A549 (cell line): ENCODE measurements at regions of chr20 and their contacts with region 1.

Region 1: GRCh38 chr20:21235484-21236445 is 67.4 kb upstream of the XRN2 start:
- DNase-seq: peak; percentile 50 to 78
- ATAC-seq: peak; percentile 90 to 92
- H3K4me3 ChIP-seq: no peak overlapping the region
- H3K27ac ChIP-seq: no peak overlapping the region
- H3K4me1 ChIP-seq: peaks cover 6% of the 10 kb centered on the region; the same call in 1 of the 3 replicates
- CTCF ChIP-seq: peak; percentile 98
- EP300 ChIP-seq: no peak
- POLR2A ChIP-seq: no peak
- RAD21 ChIP-seq: peak; percentile 78 to 85

Region 2: GRCh38 chr20:20806121-20807095 is 429.4 kb before region 1 on chr20:
- CTCF ChIA-PET with region 1: no interaction called
- POLR2A ChIA-PET with region 1: no interaction called
- DNase-seq: no peak
- ATAC-seq: no peak
- H3K4me3 ChIP-seq: no peak overlapping the region
- H3K27ac ChIP-seq: no peak overlapping the region
- H3K4me1 ChIP-seq: no peaks in the 10 kb centered on the region
- CTCF ChIP-seq: no peak
- EP300 ChIP-seq: no peak
- POLR2A ChIP-seq: no peak
- RAD21 ChIP-seq: no peak

Region 3: GRCh38 chr20:20843982-20844381 is 391.8 kb before region 1 on chr20:
- CTCF ChIA-PET with region 1: interaction called, 11 read pairs
- POLR2A ChIA-PET with region 1: no interaction called
- DNase-seq: no peak
- ATAC-seq: peak in 1 of 2 experiments; percentile 53; a peak in 2 of 6 replicates
- H3K4me3 ChIP-seq: no peak overlapping the region
- H3K27ac ChIP-seq: no peak overlapping the region
- H3K4me1 ChIP-seq: no peaks in the 10 kb centered on the region
- CTCF ChIP-seq: no peak
- EP300 ChIP-seq: no peak
- POLR2A ChIP-seq: no peak
- RAD21 ChIP-seq: no peak

Region 4: DNA sequence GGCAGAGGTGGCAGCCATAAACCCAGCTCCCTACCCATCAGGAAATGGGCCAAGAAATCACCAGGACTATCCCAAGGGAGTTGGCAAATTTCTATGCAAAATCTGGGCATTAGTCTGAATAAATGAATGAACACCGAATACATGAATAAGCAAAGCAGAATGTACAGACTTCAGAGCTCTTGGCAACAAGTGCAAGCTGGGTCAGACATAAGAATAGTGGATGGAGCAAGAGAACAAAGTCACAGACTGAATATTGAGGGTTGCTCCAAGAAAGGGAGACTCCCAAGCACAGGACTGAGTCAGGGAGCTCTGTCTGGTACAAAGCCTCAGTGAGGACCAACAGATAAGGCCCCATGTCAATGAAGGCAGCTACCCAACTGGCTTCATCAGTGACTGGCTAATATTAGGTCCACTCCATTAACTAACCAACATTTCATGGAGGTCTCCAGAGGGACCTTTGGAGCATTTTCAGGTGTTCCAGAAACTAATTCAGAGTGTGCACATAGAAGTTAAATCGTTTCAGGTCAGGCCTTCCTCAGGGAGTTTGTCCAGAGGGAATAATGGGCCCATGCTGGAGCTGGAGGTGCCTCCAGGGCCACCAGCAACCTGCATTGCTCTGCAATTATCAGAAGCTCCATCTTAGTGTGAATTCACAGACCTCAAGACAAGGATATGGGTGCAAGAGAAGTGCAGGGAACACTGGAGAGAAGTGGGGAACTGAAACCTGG is 331.8 kb before region 1 on chr20:
- CTCF ChIA-PET with region 1: no interaction called
- POLR2A ChIA-PET with region 1: no interaction called
- DNase-seq: no peak
- ATAC-seq: no peak
- H3K4me3 ChIP-seq: no peak overlapping the region
- H3K27ac ChIP-seq: no peak overlapping the region
- H3K4me1 ChIP-seq: no peaks in the 10 kb centered on the region
- CTCF ChIP-seq: no peak
- EP300 ChIP-seq: no peak
- POLR2A ChIP-seq: no peak
- RAD21 ChIP-seq: no peak

Region 5: DNA sequence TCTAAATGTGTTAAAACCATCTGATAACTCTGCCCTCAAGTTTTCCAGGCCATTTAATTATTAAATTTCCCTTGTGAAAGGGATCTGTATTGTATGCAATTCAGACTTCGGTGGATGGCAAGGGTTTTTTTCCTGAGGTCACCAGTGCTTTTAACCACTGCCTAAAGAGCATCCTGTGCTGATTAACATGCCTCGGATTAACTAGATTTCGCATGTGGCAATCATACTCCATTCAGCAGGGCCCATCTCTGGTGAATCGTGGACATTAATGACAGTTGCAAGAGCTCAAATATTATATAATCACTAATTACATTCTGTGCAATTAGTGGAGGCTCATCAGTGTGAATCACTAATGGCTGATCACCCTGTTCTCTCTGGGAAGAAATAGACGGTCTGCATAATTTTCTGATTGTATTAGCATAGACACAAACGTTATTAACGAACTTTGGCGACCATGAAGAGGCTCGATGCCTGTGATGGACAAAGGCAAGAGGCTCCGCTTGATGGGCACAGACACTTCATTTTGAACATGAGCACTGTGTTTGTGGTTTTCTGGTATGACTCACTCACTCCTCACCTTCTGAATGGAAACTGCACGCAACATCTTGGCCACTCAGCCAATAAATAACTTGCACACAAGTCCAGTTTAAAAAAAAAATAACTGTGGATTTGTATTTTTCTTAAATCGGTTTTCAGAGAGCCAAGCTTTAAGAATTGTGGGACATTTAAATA is 161.0 kb before region 1 on chr20:
- CTCF ChIA-PET with region 1: no interaction called
- POLR2A ChIA-PET with region 1: no interaction called
- DNase-seq: no peak
- ATAC-seq: peak in 1 of 2 experiments; percentile 54; a peak in 1 of 6 replicates
- H3K4me3 ChIP-seq: no peak overlapping the region
- H3K27ac ChIP-seq: no peak overlapping the region
- H3K4me1 ChIP-seq: no peaks in the 10 kb centered on the region
- CTCF ChIP-seq: no peak
- EP300 ChIP-seq: no peak
- POLR2A ChIP-seq: no peak
- RAD21 ChIP-seq: no peak

Region 6: GRCh38 chr20:21182832-21183563 is 52.8 kb before region 1 on chr20:
- CTCF ChIA-PET with region 1: interaction called, 20 read pairs
- POLR2A ChIA-PET with region 1: no interaction called
- DNase-seq: peak in 1 of 2 experiments; percentile 47
- ATAC-seq: peak; percentile 85 to 88
- H3K4me3 ChIP-seq: no peak overlapping the region
- H3K27ac ChIP-seq: peak overlapping the region; percentile 16 to 66; a peak in 4 of 6 replicates
- H3K4me1 ChIP-seq: peaks cover 32% of the 10 kb centered on the region
- CTCF ChIP-seq: no peak
- EP300 ChIP-seq: no peak; a peak in 1 of 5 replicates
- POLR2A ChIP-seq: no peak
- RAD21 ChIP-seq: no peak

Region 7: GRCh38 chr20:21251278-21251677 is 15.5 kb after region 1 on chr20:
- CTCF ChIA-PET with region 1: interaction called, 49 read pairs
- POLR2A ChIA-PET with region 1: no interaction called
- DNase-seq: no peak
- ATAC-seq: no peak
- H3K4me3 ChIP-seq: no peak overlapping the region
- H3K27ac ChIP-seq: no peak overlapping the region
- H3K4me1 ChIP-seq: no peaks in the 10 kb centered on the region
- CTCF ChIP-seq: no peak
- EP300 ChIP-seq: no peak
- POLR2A ChIP-seq: no peak
- RAD21 ChIP-seq: no peak

Region 8: GRCh38 chr20:21303061-21303871 is 67.5 kb after region 1 on chr20 and contains the start of gene XRN2:
- CTCF ChIA-PET with region 1: interaction called, 11 read pairs
- POLR2A ChIA-PET with region 1: no interaction called
- DNase-seq: peak; percentile 85 to 97
- ATAC-seq: peak; percentile 97
- H3K4me3 ChIP-seq: peak within 1 kb of the TSS; percentile 95
- H3K27ac ChIP-seq: peak within 1 kb of the TSS; percentile 97 to 98
- H3K4me1 ChIP-seq: peaks cover 14% of the 10 kb centered on the region; the same call in 2 of the 3 replicates
- CTCF ChIP-seq: no peak
- EP300 ChIP-seq: no peak
- POLR2A ChIP-seq: peak; percentile 95
- RAD21 ChIP-seq: no peak
- polyA plus RNA-seq, gene XRN2: 151 and 192 TPM in 2 replicates

Region 9: GRCh38 chr20:21505161-21505809 is 269.5 kb after region 1 on chr20:
- CTCF ChIA-PET with region 1: interaction called, 610 read pairs
- POLR2A ChIA-PET with region 1: no interaction called
- DNase-seq: peak; percentile 70 to 83
- ATAC-seq: peak; percentile 41 to 77
- H3K4me3 ChIP-seq: peak overlapping the region; percentile 55
- H3K27ac ChIP-seq: peak overlapping the region; percentile 40 to 77; a peak in 5 of 6 replicates
- H3K4me1 ChIP-seq: peaks cover 6% of the 10 kb centered on the region; the same call in 1 of the 3 replicates
- CTCF ChIP-seq: peak; percentile 95
- EP300 ChIP-seq: no peak
- POLR2A ChIP-seq: no peak
- RAD21 ChIP-seq: peak; percentile 97 to 99

Region 10: DNA sequence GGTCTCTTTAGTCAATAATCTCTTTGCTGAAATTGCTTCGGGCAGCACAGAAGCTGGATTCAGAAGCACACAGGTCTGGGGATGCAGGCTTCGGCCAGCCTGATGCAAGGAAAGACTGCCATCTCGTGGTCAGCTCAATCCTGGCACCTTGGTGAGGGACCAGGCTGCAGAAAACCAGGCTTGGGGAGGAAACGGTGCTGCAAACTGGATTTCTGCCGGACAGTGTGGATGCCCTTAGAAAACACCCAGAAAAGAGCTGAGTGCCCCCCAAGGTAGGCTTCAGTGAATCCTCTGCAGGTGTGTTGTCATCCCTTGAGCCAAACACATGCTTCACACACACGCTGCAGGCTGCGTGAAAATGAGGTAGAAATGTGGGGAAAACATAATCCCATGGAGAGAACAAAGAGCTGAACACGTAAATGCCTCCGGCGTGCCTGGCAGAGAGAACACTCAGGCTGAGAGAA is 379.9 kb after region 1 on chr20:
- CTCF ChIA-PET with region 1: interaction called, 27 read pairs
- POLR2A ChIA-PET with region 1: no interaction called
- DNase-seq: peak; percentile 71 to 73
- ATAC-seq: peak; percentile 88 to 98
- H3K4me3 ChIP-seq: no peak overlapping the region
- H3K27ac ChIP-seq: no peak overlapping the region
- H3K4me1 ChIP-seq: no peaks in the 10 kb centered on the region
- CTCF ChIP-seq: peak; percentile 84
- EP300 ChIP-seq: no peak
- POLR2A ChIP-seq: no peak
- RAD21 ChIP-seq: peak; percentile 77 to 87